Activated T-helper 2 cell treated with anti-CD3 and anti-CD28 coated beads, Interferon-gamma antibody, Interleukin-2, Interleukin-4, amounts not matched to agents 10 μg/mL and 5 μg/mL and 100 μg/mL, durations not matched to agents 14 hours and 24 hours and 36 hours (primary cell): ENCODE measurements at regions of chr2 and their contacts with region 1.

Region 1: DNA sequence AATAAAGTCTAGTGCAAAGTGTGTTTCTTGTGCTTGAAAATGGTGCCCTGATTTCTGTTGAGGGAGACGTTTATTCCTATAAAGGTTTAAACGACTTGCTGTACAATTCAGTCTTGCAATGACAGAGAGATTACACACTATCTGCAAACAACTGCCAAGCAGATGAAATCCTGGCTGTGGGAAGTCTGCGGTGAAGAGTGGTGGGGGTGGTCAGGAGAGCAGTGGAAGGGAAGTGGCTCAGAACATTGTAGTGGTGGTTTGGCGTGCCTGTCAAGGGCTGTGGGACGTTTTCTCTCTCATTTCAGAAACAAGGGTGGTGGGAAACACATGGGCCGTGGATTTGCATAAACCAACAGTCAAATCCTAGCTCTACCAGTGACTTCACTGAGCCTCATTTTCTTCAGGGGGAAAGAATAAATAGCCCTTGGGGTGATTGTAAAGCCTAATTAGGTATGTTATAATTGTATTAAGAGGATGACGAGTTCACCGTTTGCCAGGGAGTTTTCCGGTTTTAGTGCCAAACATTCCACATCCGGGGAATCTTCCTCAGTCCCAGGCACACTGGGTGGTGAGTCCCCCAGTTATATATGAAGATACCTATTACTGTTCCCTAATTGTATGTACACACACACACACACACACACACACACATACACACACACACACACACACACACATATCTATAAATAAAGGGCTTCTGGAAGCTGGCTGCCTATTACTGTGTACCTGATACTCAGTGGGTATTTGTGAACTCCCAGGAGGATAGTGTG is 115.0 kb downstream of the SPTBN1 start:
- DNase-seq: peak; percentile 81
- H3K4me3 Mint-ChIP-seq: peak overlapping the region; percentile 62
- H3K27ac Mint-ChIP-seq: peak overlapping the region; percentile 97
- H3K4me1 Mint-ChIP-seq: peaks cover 77% of the 10 kb centered on the region
- H3K27me3 Mint-ChIP-seq: no peaks in the 10 kb centered on the region

Region 2: DNA sequence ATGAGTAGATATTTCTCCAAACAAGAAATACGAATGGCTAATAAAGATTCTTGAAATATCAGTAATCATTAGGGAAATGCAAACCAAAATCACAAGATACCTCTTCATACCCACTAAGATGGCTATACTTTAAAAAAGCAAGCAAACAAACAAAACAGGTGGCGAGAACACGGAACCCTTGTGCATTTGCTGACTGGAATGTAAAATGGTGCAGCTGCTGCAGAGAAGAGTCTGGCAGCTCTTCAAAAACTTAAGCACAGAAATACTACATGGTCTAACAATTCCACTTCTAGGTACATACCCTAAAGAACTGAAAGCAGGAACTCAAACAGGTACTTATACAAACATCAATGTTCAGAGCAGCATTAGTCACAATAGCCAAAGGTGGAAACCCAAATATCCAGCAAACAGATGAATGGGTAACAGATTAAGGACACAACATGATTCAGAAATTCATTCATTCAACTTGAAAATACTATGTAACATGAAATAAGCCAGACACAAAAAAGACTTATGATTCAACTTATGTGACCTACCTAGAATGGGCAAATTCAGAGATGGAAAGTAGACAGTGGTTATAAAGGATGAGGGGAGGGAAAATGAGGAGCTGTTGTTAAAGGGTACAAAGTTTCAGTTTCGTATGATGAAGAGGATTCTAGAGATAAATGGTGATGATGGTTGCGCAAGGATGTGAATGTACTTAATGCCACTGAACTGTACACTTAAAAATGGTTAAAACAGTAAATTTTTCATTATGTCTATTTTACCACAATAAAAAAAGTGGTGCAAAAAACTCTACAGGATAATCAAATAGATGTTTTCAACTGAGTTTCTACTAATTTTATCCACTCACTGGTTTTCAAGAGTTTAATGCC is 684.5 kb before region 1 on chr2:
- intact Hi-C with region 1: loop called (anchors 5 kb)
- DNase-seq: no peak
- H3K4me3 Mint-ChIP-seq: no peak overlapping the region
- H3K27ac Mint-ChIP-seq: peak overlapping the region; percentile 47
- H3K4me1 Mint-ChIP-seq: peaks cover 43% of the 10 kb centered on the region
- H3K27me3 Mint-ChIP-seq: no peaks in the 10 kb centered on the region

Region 3: GRCh38 chr2:54531558-54531957 is 39.6 kb before region 1 on chr2:
- intact Hi-C with region 1: loop called (anchors 1 kb)
- DNase-seq: no peak
- H3K4me3 Mint-ChIP-seq: no peak overlapping the region
- H3K27ac Mint-ChIP-seq: no peak overlapping the region
- H3K4me1 Mint-ChIP-seq: peaks cover 36% of the 10 kb centered on the region
- H3K27me3 Mint-ChIP-seq: peaks cover 7% of the 10 kb centered on the region

Region 4: GRCh38 chr2:54589340-54590215 is 18.5 kb after region 1 on chr2:
- intact Hi-C with region 1: loop called (anchors 1 kb)
- DNase-seq: no peak
- H3K4me3 Mint-ChIP-seq: peak overlapping the region; percentile 62
- H3K27ac Mint-ChIP-seq: peak overlapping the region; percentile 93
- H3K4me1 Mint-ChIP-seq: peaks cover 70% of the 10 kb centered on the region
- H3K27me3 Mint-ChIP-seq: no peaks in the 10 kb centered on the region

Region 5: DNA sequence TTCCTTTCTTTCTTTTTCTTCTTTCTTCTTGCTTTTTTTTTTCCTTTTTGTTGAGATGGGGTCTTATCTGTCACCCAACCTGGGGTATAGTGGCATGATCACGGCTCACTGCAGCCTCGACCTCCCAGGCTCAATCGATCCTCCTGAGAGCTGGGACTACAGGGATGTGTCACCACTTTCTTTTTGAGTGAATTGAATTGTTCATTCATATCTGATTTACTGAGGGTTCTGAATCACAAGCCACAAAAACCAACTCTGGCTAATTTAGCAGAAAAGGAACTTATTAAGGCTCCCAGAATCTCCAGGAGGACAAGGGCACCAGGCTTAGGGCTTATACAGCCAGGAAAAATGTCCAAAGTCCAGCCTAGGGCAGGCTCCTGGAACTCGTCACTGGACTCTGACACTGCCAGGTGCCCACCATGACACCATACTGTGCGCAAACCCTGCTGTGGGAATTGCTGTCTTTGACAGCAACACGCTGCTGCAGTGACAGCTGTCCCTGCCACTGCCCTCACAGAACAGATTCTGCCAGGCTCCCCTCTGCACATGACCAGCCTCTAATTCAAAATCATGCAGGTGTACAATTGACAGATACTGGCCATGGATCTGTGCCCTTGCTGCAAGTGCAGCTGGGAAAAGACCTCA is 109.4 kb after region 1 on chr2:
- intact Hi-C with region 1: loop called (anchors 1 kb)
- DNase-seq: peak; percentile 39
- H3K4me3 Mint-ChIP-seq: peak overlapping the region; percentile 78
- H3K27ac Mint-ChIP-seq: peak overlapping the region; percentile 65
- H3K4me1 Mint-ChIP-seq: peaks cover 61% of the 10 kb centered on the region
- H3K27me3 Mint-ChIP-seq: peaks cover 54% of the 10 kb centered on the region

Region 6: GRCh38 chr2:54704688-54705605 is 133.8 kb after region 1 on chr2:
- intact Hi-C with region 1: no loop called
- DNase-seq: no peak
- H3K4me3 Mint-ChIP-seq: no peak overlapping the region
- H3K27ac Mint-ChIP-seq: no peak overlapping the region
- H3K4me1 Mint-ChIP-seq: peaks cover 15% of the 10 kb centered on the region
- H3K27me3 Mint-ChIP-seq: peaks cover 53% of the 10 kb centered on the region

Region 7: DNA sequence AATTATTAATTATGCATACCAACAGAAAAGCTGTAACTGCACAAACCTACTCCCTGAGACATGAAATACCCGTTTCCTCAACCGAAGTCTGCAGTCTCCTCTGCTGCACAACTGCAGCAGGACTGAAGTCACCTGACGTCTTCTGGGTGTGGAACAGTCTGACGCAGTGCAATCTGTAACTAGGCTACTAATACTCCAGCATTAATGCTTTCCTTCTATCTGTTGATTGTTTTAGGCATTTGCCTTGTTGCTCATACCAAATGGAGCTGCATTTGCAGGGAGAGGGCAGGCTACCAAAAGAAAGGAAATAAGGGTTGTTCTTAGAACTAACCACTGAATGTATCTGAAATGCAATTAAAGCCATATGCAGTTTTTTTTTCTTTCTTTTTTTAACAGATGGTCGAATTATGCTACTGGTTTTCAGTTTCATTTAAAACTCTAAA is 439.1 kb after region 1 on chr2:
- intact Hi-C with region 1: loop called (anchors 10 kb)
- DNase-seq: peak; percentile 40
- H3K4me3 Mint-ChIP-seq: peak overlapping the region; percentile 85
- H3K27ac Mint-ChIP-seq: peak overlapping the region; percentile 70
- H3K4me1 Mint-ChIP-seq: peaks cover 56% of the 10 kb centered on the region
- H3K27me3 Mint-ChIP-seq: no peaks in the 10 kb centered on the region

Region 8: GRCh38 chr2:55617175-55618024 is 1046.3 kb after region 1 on chr2 and contains the start of gene PPP4R3B:
- intact Hi-C with region 1: loop called (anchors 10 kb)
- DNase-seq: peak; percentile 99
- H3K4me3 Mint-ChIP-seq: no peak within 1 kb of the TSS
- H3K27ac Mint-ChIP-seq: no peak within 1 kb of the TSS
- H3K4me1 Mint-ChIP-seq: peaks cover 25% of the 10 kb centered on the region
- H3K27me3 Mint-ChIP-seq: no peaks in the 10 kb centered on the region
- total RNA-seq, gene PPP4R3B: 69.7 and 69.9 TPM in 2 replicates